Endothelial cell of umbilical vein (primary cell): ENCODE measurements at regions of chr1 and their contacts with region 1.

Region 1: DNA sequence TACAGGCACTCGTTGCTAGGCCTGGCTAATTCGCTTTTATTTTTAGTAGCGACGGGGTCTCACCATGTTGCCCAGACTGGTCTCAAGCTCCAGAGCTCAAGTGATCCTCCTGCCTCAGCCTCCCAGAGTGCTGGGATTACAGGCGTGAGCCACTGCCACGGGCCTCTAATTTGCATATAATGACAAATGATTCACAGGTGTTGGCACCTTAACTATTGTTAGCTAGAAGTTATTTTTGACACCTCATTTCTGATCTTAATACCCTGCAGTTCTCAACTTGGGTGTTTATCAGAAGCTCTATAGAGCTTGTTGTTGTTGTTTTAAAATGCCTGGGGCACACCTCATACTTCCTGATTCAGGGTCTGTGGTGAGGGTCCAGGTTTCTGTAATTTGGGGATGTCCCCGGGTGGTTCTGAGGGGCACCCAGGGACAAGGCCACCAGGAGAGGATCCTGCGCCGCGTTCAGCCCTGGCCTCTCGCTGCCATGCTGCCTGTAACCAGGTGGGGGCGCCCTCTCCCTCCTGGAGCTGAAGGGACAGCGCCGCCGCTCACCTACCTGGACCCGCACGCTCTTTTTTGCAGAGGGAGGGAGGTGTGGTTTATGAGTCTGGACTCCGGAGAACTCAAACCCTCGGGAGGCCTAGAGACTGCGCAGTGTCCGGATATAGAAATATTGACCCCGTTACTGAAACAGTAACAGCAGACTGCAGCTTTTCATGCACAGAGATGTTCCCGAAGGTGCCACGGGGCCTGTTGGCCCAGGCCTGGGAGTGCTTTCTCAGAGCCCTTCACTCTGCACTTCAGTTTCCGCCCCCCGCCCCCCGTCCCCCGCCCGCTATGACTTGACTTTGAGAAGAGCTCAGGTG is 23.0 kb upstream of the NEK2 start:
- DNase-seq: peak; percentile 60
- H3K4me3 ChIP-seq: no peak overlapping the region
- H3K27ac ChIP-seq: no peak overlapping the region
- H3K4me1 ChIP-seq: no peaks in the 10 kb centered on the region
- H3K27me3 ChIP-seq: peaks cover 10 to 11% of the 10 kb centered on the region in 2 experiments
- CTCF ChIP-seq: peak; percentile 96 to 98
- POLR2A ChIP-seq: no peak

Region 2: GRCh38 chr1:211711315-211711705 is 12.9 kb after region 1 on chr1:
- CTCF ChIA-PET with region 1: interaction called, 21 read pairs
- POLR2A ChIA-PET with region 1: no interaction called
- dilution Hi-C with region 1: no loop called
- intact Hi-C with region 1: no loop called
- DNase-seq: no peak
- H3K4me3 ChIP-seq: no peak overlapping the region
- H3K27ac ChIP-seq: no peak overlapping the region
- H3K4me1 ChIP-seq: no peaks in the 10 kb centered on the region
- H3K27me3 ChIP-seq: no peaks in the 10 kb centered on the region
- CTCF ChIP-seq: no peak
- POLR2A ChIP-seq: no peak

Region 3: DNA sequence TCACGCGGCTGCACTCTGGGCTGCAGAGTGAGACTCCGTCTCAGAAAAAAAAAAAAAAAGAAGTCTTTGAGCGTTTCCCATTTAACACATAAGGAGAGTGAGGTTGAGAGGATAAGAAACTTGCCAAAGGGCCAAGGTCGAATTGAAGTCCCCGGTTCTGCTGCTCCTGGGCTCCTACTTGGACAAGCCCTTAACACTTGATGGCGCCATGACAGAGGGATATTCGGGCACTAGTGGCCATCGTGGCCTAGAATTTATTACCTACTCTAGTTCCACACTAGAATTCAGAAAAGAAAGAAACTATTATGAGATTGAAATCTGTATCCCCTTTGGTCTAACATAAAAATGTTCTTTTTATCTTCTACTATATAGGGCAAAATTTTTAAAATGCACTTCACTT is 42.7 kb after region 1 on chr1:
- CTCF ChIA-PET with region 1: interaction called, 12 read pairs
- POLR2A ChIA-PET with region 1: no interaction called
- dilution Hi-C with region 1: no loop called
- intact Hi-C with region 1: no loop called
- DNase-seq: no peak
- H3K4me3 ChIP-seq: no peak overlapping the region
- H3K27ac ChIP-seq: no peak overlapping the region
- H3K4me1 ChIP-seq: no peaks in the 10 kb centered on the region
- H3K27me3 ChIP-seq: no peaks in the 10 kb centered on the region
- CTCF ChIP-seq: no peak
- POLR2A ChIP-seq: no peak

Region 4: GRCh38 chr1:211781260-211781659 is 82.9 kb after region 1 on chr1:
- CTCF ChIA-PET with region 1: interaction called, 4 read pairs
- POLR2A ChIA-PET with region 1: no interaction called
- dilution Hi-C with region 1: no loop called
- intact Hi-C with region 1: loop called (anchors 5 kb)
- DNase-seq: peak; percentile 32
- H3K4me3 ChIP-seq: no peak overlapping the region
- H3K27ac ChIP-seq: no peak overlapping the region
- H3K4me1 ChIP-seq: peaks cover 16% of the 10 kb centered on the region
- H3K27me3 ChIP-seq: no peaks in the 10 kb centered on the region
- CTCF ChIP-seq: no peak
- POLR2A ChIP-seq: no peak

Region 5: GRCh38 chr1:211830330-211831142 is 132.1 kb after region 1 on chr1 and contains the start of gene LPGAT1:
- CTCF ChIA-PET with region 1: interaction called, 14 read pairs
- POLR2A ChIA-PET with region 1: no interaction called
- dilution Hi-C with region 1: no loop called
- intact Hi-C with region 1: loop called (anchors 1 kb)
- DNase-seq: peak; percentile 58
- H3K4me3 ChIP-seq: peak within 1 kb of the TSS; percentile 74 to 92 (median 82)
- H3K27ac ChIP-seq: peak within 1 kb of the TSS; percentile 55
- H3K4me1 ChIP-seq: peaks cover 7% of the 10 kb centered on the region
- H3K27me3 ChIP-seq: no peaks in the 10 kb centered on the region
- CTCF ChIP-seq: peak; percentile 53 to 63
- POLR2A ChIP-seq: peak; percentile 36
- total RNA-seq, gene LPGAT1: 46.0 and 49.5 TPM in 2 replicates

Region 6: GRCh38 chr1:212012034-212012740 is 313.8 kb after region 1 on chr1:
- CTCF ChIA-PET with region 1: interaction called, 10 read pairs
- POLR2A ChIA-PET with region 1: no interaction called
- dilution Hi-C with region 1: no loop called
- intact Hi-C with region 1: loop called (anchors 5 kb)
- DNase-seq: peak; percentile 70
- H3K4me3 ChIP-seq: no peak overlapping the region
- H3K27ac ChIP-seq: no peak overlapping the region
- H3K4me1 ChIP-seq: peaks cover 4% of the 10 kb centered on the region
- H3K27me3 ChIP-seq: no peaks in the 10 kb centered on the region
- CTCF ChIP-seq: peak; percentile 90 to 92
- POLR2A ChIP-seq: no peak